Tibial artery (tissue), 4 donors: ENCODE measurements at regions of chr16 and their contacts with region 1.

Region 1: GRCh38 chr16:72013389-72013788 is 4.8 kb downstream of the DHODH start:
- DNase-seq: no peak
- H3K4me3 ChIP-seq: no peak overlapping the region
- H3K27ac ChIP-seq: peak overlapping the region in 1 of 2 donors; percentile 11
- H3K4me1 ChIP-seq: peaks cover 0 to 11% (median 0%) of the 10 kb centered on the region in 4 donors
- H3K27me3 ChIP-seq: no peaks in the 10 kb centered on the region
- CTCF ChIP-seq: no peak

Region 2: GRCh38 chr16:72066747-72067146 is 53.4 kb after region 1 on chr16:
- intact Hi-C with region 1: no loop called
- DNase-seq: no peak
- H3K4me3 ChIP-seq: no peak overlapping the region
- H3K27ac ChIP-seq: no peak overlapping the region
- H3K4me1 ChIP-seq: no peaks in the 10 kb centered on the region
- H3K27me3 ChIP-seq: no peaks in the 10 kb centered on the region
- CTCF ChIP-seq: peak; percentile 41 to 55

Region 3: DNA sequence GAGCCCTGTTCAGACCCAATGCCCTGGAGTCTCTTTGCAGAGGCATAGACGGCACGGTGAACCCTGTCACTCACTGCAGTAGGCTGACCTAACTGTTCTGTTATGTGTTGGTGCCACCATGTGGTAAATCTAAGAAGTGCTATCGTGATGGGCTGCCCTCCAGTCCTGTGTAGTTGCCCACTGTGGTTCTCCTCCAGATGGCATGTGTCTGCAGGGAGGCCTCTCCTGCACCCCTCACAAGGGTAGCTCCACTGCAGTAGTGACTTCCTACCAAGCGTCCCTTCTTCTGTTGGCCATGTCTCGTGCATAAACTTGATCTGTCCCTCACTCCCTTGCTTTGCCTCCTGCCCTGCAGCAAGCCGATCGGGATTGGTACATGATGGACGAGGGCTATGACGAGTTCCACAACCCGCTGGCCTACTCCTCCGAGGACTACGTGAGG is 86.0 kb after region 1 on chr16:
- intact Hi-C with region 1: loop called (anchors 5 kb)
- DNase-seq: no peak
- H3K4me3 ChIP-seq: no peak overlapping the region
- H3K27ac ChIP-seq: no peak overlapping the region
- H3K4me1 ChIP-seq: peaks cover 0 to 18% (median 10%) of the 10 kb centered on the region in 4 donors
- H3K27me3 ChIP-seq: no peaks in the 10 kb centered on the region
- CTCF ChIP-seq: peak; percentile 41 to 56